ENCODE measurements at regions of chr17 and their contacts with region 1.

Region 1: DNA sequence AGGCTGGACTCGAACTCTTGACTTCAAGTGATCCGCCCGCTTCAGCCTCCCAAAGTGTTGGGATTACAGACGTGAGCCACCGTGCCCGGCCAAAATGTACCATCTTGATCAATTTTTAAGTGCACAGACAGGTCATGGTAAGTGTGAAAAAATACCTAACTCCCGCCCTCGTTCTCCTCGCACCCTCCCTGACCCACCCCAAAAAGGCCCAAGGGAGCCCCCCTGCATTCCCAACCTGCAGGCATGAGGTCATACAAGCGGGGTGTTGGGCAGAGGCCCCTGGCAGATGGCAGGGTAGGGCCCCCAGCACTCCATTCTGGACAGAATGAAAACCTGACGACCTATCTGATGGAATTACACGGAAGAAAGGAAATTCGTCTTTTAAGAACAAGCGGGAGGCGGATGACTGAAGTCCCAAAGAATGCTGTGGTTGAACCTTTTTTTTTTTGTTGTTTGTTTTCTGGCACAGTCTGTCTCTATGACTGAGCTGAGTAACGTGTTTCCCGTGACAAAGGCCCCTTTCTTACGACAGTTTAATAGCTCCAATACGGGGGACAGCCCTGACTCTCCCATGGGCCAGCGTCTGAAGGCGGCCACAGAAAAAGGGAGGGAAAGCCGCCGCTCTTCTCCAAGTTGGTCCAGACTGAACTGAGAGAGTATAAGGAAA is 376.4 kb downstream of the SLC39A11 start:
- DNase-seq: peak in 1 of 2 donors; percentile 71
- H3K4me3 ChIP-seq: peak overlapping the region in 1 of 3 donors; percentile 21
- H3K27ac ChIP-seq: peak overlapping the region; percentile 68 to 79
- H3K4me1 ChIP-seq: no peaks in the 10 kb centered on the region
- H3K27me3 ChIP-seq: no peaks in the 10 kb centered on the region
- CTCF ChIP-seq: no peak
- POLR2A ChIP-seq: no peak

Region 2: DNA sequence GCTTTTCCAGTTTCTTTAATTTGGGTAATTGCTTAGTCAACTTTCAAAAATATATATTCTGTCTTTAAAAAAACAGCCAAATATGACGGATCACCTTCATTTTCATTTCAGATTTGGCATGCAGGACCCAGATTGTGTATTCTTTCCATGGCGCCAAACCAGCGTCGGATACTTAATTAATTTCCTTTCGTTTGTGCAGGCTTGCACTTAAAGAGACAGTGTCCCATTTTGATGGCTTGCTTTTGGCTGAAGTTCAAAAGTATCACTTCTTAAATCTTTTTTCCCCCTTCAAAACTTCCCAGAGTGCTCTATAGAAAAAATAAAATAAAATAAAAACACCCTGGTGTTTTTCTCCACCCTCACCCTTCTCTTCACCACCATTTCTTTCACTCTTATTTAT is 989.7 kb before region 1 on chr17:
- intact Hi-C with region 1: loop called (anchors 5 kb)
- DNase-seq: no peak
- H3K4me3 ChIP-seq: peak overlapping the region in 1 of 3 donors; percentile 20
- H3K27ac ChIP-seq: no peak overlapping the region
- H3K4me1 ChIP-seq: no peaks in the 10 kb centered on the region
- H3K27me3 ChIP-seq: no peaks in the 10 kb centered on the region
- CTCF ChIP-seq: no peak
- POLR2A ChIP-seq: no peak

Region 3: DNA sequence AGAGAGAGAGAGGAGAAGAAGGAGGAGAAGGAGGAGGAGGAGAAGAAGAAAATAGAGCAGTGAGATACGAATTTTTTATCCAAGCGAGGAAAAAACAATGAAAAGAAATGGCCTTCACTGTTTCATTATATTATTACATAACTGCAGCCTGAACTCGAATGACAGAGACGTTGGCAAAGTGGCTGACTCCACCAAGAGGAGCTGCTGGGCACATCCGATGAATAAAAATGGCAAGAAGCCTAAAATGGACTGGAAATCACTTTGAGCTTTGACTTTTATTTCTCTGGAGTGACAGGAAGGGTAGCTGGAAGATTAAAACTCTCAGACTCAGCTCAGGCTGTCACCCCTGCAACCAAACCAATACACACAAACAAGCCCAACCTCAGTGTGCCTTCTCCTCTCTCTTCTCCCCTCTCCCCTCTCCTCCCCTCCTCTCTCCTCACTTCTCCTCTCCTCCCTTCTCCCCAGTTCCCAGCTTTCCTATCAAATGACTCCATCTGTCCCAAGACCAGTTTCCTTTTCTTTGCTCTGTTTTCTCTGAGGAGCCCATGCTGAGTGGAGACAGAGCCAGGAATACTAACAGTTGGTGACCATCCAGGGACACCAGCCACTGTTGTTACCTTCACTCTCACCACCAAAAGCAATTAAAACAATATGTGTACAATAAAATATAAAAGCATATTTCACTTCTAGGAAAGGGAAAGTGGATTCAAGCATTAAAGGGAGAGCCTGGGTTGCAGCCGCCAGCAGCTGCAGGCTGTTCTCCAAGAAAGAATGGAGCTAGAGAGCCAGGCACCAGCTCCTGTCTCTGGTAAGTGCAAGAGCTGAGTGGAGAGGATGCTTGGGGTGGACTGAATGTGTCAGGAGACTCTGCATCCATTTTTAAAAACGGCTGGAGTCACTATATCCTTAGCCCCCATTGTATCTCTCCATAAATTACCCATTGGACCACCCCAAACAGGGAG is 544.1 kb before region 1 on chr17:
- intact Hi-C with region 1: loop called (anchors 5 kb)
- DNase-seq: no peak
- H3K4me3 ChIP-seq: no peak overlapping the region
- H3K27ac ChIP-seq: no peak overlapping the region
- H3K4me1 ChIP-seq: no peaks in the 10 kb centered on the region
- H3K27me3 ChIP-seq: no peaks in the 10 kb centered on the region
- CTCF ChIP-seq: no peak
- POLR2A ChIP-seq: no peak